Aorta (tissue), 5 donors: ENCODE measurements at regions of chr7 and their contacts with region 1.

Region 1: GRCh38 chr7:75055830-75056772 is 17.5 kb downstream of the RCC1L start:
- DNase-seq: peak in 1 of 2 donors; percentile 76
- ATAC-seq: peak; percentile 82
- H3K4me3 ChIP-seq: no peak overlapping the region
- H3K27ac ChIP-seq: peak overlapping the region; percentile 94 to 96
- H3K4me1 ChIP-seq: peaks cover 0 to 2% of the 10 kb centered on the region in 2 donors
- H3K27me3 ChIP-seq: no peaks in the 10 kb centered on the region

Region 2: GRCh38 chr7:75010036-75010435 is 46.1 kb before region 1 on chr7:
- intact Hi-C with region 1: no loop called
- DNase-seq: no peak
- ATAC-seq: no peak
- H3K4me3 ChIP-seq: no peak overlapping the region
- H3K27ac ChIP-seq: no peak overlapping the region
- H3K4me1 ChIP-seq: no peaks in the 10 kb centered on the region
- H3K27me3 ChIP-seq: no peaks in the 10 kb centered on the region

Region 3: DNA sequence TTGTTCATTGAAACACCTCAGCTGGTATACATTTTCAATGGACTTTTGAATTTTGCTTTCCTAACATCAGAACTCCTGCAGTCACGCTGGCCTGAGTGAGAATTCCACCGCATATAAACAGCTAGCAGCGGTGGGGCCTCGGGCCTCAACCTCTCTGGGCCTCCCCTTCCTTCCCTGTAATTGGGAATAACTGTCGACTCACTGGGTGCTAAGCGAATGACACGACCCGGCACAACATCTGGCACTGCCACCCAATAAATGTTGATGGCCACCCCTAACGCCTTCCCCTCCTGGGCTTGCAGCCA is 16.8 kb after region 1 on chr7:
- intact Hi-C with region 1: loop called in 1 of 2 experiments (anchors 2 kb)
- DNase-seq: no peak
- ATAC-seq: peak; percentile 3
- H3K4me3 ChIP-seq: peak overlapping the region; percentile 54 to 66
- H3K27ac ChIP-seq: peak overlapping the region in 1 of 2 donors; percentile 64
- H3K4me1 ChIP-seq: no peaks in the 10 kb centered on the region
- H3K27me3 ChIP-seq: no peaks in the 10 kb centered on the region

Region 4: DNA sequence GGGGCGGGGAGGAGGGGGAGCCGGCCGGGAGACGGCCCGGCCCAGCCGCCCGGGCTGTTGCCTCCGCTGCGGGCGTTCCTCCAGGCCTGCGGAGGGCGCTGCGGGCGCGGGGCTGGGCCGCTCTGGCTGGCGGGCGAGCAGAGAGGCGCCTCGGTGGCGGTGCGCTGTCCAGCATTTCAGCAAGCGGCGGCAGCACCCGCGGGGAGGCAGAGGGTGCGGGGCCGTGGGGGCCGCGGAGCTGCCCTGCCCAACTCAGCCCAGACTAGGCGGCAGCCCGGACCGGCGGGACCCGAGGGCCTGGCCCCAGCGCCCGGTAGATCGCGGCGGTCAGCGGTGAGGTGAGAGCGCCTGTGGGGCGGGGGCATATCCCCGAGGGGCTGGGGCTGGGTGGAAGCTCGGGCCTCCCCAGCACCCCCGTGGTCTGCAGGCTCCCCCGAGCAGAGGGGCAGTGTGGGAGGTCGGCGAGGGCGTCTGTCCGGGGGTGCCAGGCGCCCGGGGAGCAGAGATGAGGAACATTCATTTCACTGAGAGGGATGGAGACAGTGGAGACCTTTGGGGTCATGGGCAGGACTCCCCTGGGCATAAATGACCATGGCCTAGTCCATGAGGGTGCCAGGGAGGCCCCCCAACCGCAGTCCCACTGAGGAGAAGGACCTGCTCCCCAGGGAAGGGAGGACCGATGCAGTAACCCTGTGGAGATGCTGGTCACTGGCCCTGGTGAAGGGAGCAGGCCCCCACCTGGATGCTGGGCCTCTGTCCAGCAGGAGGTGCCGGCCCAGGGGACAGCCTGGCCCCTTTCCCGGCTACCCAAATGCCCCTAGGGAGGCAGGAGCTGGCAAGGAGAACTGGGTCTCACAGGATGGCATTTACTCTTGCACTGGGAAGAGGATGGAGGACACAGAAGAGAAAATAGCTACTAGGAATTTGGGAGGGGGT is 1145.9 kb after region 1 on chr7 and contains the start of gene SRRM3:
- intact Hi-C with region 1: no loop called
- DNase-seq: peak; percentile 83 to 93
- ATAC-seq: peak; percentile 92
- H3K4me3 ChIP-seq: no peak within 1 kb of the TSS
- H3K27ac ChIP-seq: no peak within 1 kb of the TSS
- H3K4me1 ChIP-seq: no peaks in the 10 kb centered on the region
- H3K27me3 ChIP-seq: no peaks in the 10 kb centered on the region
- total RNA-seq, gene SRRM3: 3.0 to 5.9 TPM